ENCODE measurements at regions of chr6 and their contacts with region 1.

Region 1: GRCh38 chr6:28225056-28225834 is at the start of gene ZSCAN9:
- DNase-seq: peak; percentile 75 to 83
- ATAC-seq: peak; percentile 93 to 99
- H3K4me3 ChIP-seq: peak within 1 kb of the TSS; percentile 66 to 88 (median 86)
- H3K27ac ChIP-seq: peak within 1 kb of the TSS; percentile 63 to 80 (median 71)
- H3K4me1 ChIP-seq: peaks cover 13 to 16% of the 10 kb centered on the region in 2 donors
- H3K27me3 ChIP-seq: peaks cover 0 to 12% (median 6%) of the 10 kb centered on the region in 3 donors
- CTCF ChIP-seq: no peak
- POLR2A ChIP-seq: no peak
- total RNA-seq, gene ZSCAN9: 3.7 to 6.5 (median 4.3) TPM

Region 2: GRCh38 chr6:28104392-28105244 is 120.6 kb before region 1 on chr6:
- in situ Hi-C with region 1: no loop called
- intact Hi-C with region 1: loop called (anchors 1 kb)
- DNase-seq: peak; percentile 35 to 63
- ATAC-seq: peak; percentile 97 to 99
- H3K4me3 ChIP-seq: peak overlapping the region; percentile 62 to 94 (median 82)
- H3K27ac ChIP-seq: peak overlapping the region; percentile 68 to 82 (median 74)
- H3K4me1 ChIP-seq: peaks cover 0 to 3% of the 10 kb centered on the region in 2 donors
- H3K27me3 ChIP-seq: no peaks in the 10 kb centered on the region
- CTCF ChIP-seq: peak; percentile 38 to 76 (median 60)
- POLR2A ChIP-seq: peak in 1 of 2 donors; percentile 32

Region 3: GRCh38 chr6:28303570-28303969 is 78.3 kb after region 1 on chr6:
- in situ Hi-C with region 1: no loop called
- intact Hi-C with region 1: no loop called
- DNase-seq: no peak
- ATAC-seq: no peak
- H3K4me3 ChIP-seq: no peak overlapping the region
- H3K27ac ChIP-seq: no peak overlapping the region
- H3K4me1 ChIP-seq: no peaks in the 10 kb centered on the region
- H3K27me3 ChIP-seq: no peaks in the 10 kb centered on the region
- CTCF ChIP-seq: no peak
- POLR2A ChIP-seq: no peak

Measured in gastrocnemius medialis (tissue), 4 donors.